Keratinocyte (primary cell): ENCODE measurements at regions of chr9 and their contacts with region 1.

Region 1: GRCh38 chr9:72383978-72384709 is 19.1 kb upstream of the ZFAND5 start:
- DNase-seq: no peak
- H3K4me3 ChIP-seq: no peak overlapping the region
- H3K27ac ChIP-seq: peak overlapping the region; percentile 37
- H3K4me1 ChIP-seq: peaks cover 9% of the 10 kb centered on the region
- H3K27me3 ChIP-seq: no peaks in the 10 kb centered on the region
- CTCF ChIP-seq: no peak

Region 2: DNA sequence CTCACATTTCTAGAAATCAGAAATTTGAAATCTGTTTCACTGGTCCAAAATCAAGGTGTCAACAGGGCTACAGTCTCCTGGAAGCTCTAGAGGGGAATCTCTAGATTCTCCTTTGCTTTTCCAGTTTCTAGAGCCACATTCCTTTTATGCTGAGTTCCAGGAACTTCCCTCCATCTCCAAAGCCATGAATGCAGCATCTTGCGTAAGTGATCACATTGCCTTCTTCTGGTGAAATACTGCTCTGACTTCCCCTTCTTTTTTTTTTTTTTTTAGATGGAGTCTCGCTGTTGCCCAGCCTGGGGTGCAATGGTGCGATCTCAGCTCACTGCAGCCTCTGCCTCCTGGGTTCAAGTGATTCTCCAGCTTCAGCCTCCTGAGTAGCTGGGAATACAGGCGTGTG is 211.1 kb before region 1 on chr9:
- dilution Hi-C with region 1: no loop called
- DNase-seq: no peak
- H3K4me3 ChIP-seq: no peak overlapping the region
- H3K27ac ChIP-seq: no peak overlapping the region
- H3K4me1 ChIP-seq: no peaks in the 10 kb centered on the region
- H3K27me3 ChIP-seq: no peaks in the 10 kb centered on the region
- CTCF ChIP-seq: no peak

Region 3: GRCh38 chr9:72322259-72322658 is 61.9 kb before region 1 on chr9:
- dilution Hi-C with region 1: no loop called
- DNase-seq: no peak
- H3K4me3 ChIP-seq: no peak overlapping the region
- H3K27ac ChIP-seq: no peak overlapping the region
- H3K4me1 ChIP-seq: no peaks in the 10 kb centered on the region
- H3K27me3 ChIP-seq: no peaks in the 10 kb centered on the region
- CTCF ChIP-seq: no peak

Region 4: DNA sequence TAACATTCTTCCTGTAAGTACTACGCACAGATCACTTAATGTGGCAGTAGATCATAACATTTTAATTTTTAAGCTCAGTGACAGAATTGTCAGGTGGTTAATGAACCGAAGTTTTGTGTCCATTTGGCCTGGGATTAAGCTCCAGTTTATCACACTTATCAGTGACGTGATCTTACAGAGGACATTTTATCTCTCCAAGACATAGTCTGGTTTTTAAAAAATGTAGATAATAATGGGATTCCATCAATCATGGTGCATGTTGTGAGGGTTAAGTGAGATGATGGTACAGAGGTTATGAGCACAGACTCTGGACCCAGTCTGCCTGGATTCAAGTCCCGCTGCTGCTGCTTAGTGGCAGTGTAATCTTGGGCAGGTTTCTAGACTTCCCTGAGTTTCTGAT is 46.9 kb after region 1 on chr9:
- dilution Hi-C with region 1: loop called (anchors 10 kb)
- DNase-seq: no peak
- H3K4me3 ChIP-seq: no peak overlapping the region
- H3K27ac ChIP-seq: no peak overlapping the region
- H3K4me1 ChIP-seq: peaks cover 17% of the 10 kb centered on the region
- H3K27me3 ChIP-seq: no peaks in the 10 kb centered on the region
- CTCF ChIP-seq: no peak

Region 5: DNA sequence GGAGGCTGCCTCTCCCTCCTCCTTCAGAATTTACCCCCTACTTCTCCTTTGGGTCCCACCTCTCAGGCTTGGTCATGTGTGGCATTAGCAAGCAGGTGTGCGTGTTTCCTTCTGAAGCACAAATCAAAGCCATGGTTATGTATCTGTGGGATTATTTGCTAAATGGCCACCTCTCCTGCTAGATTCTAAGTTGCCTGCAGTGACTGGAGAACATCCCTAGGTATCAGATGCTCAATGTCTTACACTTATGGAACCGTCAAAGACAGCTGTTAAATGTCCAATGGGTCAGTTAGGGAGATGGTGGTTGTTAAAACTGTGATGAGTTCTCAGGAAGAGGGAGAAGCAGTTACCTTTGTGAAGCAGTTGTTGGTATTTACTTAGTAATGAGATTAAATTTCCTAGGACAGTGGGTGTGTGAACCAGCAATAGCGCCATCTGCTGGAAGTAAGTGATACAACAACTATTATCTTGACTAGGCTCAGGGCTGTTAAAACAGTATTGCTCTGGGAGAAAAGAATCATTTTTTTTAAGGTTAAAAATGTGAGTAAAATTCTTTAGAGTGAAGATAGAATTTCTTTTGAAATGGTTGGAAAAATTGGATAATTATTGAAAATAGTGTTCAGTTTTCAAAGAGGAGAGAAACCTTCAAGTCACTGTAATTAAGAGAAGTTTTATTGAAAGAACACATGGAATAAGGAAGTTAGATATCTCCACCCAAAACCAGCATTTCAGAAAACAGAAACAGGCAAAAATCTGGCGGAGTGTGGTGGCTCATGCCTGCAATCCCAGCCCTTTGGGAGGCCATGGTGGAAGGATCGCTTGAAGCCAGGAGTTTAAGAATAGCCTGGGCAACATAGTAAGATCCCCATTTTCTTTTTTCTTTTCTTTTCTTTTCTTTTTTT is 208.6 kb after region 1 on chr9:
- dilution Hi-C with region 1: no loop called
- DNase-seq: peak; percentile 25
- H3K4me3 ChIP-seq: no peak overlapping the region
- H3K27ac ChIP-seq: no peak overlapping the region
- H3K4me1 ChIP-seq: no peaks in the 10 kb centered on the region
- H3K27me3 ChIP-seq: no peaks in the 10 kb centered on the region
- CTCF ChIP-seq: peak; percentile 49 to 59 (median 59)